HepG2 (cell line): ENCODE measurements at regions of chr5 and their contacts with region 1.

Region 1: DNA sequence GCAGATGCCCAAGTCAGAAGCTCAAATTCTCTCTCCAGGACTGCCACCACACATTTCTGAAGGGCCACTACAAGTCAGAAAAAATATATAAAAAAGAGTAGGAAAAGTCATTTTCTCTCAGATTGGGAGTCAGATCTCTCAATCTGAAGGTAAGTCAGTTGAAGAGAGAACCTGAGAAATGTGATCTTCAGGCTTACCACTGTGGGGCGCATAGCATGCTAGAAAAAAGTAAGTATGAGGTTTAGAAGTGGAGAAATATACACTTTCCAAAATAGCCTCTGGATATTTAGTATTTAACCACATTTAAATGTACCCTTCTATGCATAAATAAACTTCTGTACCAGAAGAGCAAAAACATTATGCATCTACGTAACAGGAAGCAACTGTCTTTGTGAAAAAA is 800.7 kb upstream of the CTNND2 start:
- DNase-seq: no peak
- ATAC-seq: no peak
- H3K4me3 ChIP-seq: no peak overlapping the region
- H3K27ac ChIP-seq: no peak overlapping the region
- H3K4me1 ChIP-seq: no peaks in the 10 kb centered on the region
- H3K27me3 ChIP-seq: no peaks in the 10 kb centered on the region
- CTCF ChIP-seq: no peak
- EP300 ChIP-seq: no peak
- POLR2A ChIP-seq: no peak
- RAD21 ChIP-seq: no peak

Region 2: GRCh38 chr5:12661617-12662370 is 43.2 kb before region 1 on chr5:
- CTCF ChIA-PET with region 1: no interaction called
- POLR2A ChIA-PET with region 1: no interaction called
- in situ Hi-C with region 1: no loop called
- intact Hi-C with region 1: no loop called
- DNase-seq: no peak
- ATAC-seq: no peak
- H3K4me3 ChIP-seq: no peak overlapping the region
- H3K27ac ChIP-seq: no peak overlapping the region
- H3K4me1 ChIP-seq: no peaks in the 10 kb centered on the region
- H3K27me3 ChIP-seq: no peaks in the 10 kb centered on the region
- CTCF ChIP-seq: no peak
- EP300 ChIP-seq: no peak
- POLR2A ChIP-seq: no peak
- RAD21 ChIP-seq: no peak

Region 3: GRCh38 chr5:12672141-12672540 is 32.8 kb before region 1 on chr5:
- CTCF ChIA-PET with region 1: no interaction called
- POLR2A ChIA-PET with region 1: no interaction called
- in situ Hi-C with region 1: no loop called
- intact Hi-C with region 1: loop called (anchors 1 kb)
- DNase-seq: no peak
- ATAC-seq: no peak
- H3K4me3 ChIP-seq: no peak overlapping the region
- H3K27ac ChIP-seq: no peak overlapping the region
- H3K4me1 ChIP-seq: no peaks in the 10 kb centered on the region
- H3K27me3 ChIP-seq: no peaks in the 10 kb centered on the region; a peak in 1 of 5 replicates
- CTCF ChIP-seq: no peak
- EP300 ChIP-seq: no peak
- POLR2A ChIP-seq: no peak
- RAD21 ChIP-seq: no peak

Region 4: GRCh38 chr5:13478831-13479465 is 774.0 kb after region 1 on chr5:
- CTCF ChIA-PET with region 1: no interaction called
- POLR2A ChIA-PET with region 1: no interaction called
- in situ Hi-C with region 1: no loop called
- intact Hi-C with region 1: loop called (anchors 1 kb)
- DNase-seq: peak; percentile 24
- ATAC-seq: peak; percentile 85
- H3K4me3 ChIP-seq: no peak overlapping the region
- H3K27ac ChIP-seq: no peak overlapping the region
- H3K4me1 ChIP-seq: no peaks in the 10 kb centered on the region
- H3K27me3 ChIP-seq: no peaks in the 10 kb centered on the region
- CTCF ChIP-seq: peak; percentile 52
- EP300 ChIP-seq: no peak
- POLR2A ChIP-seq: no peak
- RAD21 ChIP-seq: no peak